Activated naive CD4-positive, alpha-beta T cell treated with anti-CD3 and anti-CD28 coated beads for 36 hours (primary cell): ENCODE measurements at regions of chr7 and their contacts with region 1.

Region 1: GRCh38 chr7:130758429-130759056 is 24.5 kb upstream of the KLF14 start:
- DNase-seq: no peak
- H3K4me3 Mint-ChIP-seq: no peak overlapping the region
- H3K27ac Mint-ChIP-seq: no peak overlapping the region
- H3K4me1 Mint-ChIP-seq: no peaks in the 10 kb centered on the region
- H3K27me3 Mint-ChIP-seq: peaks cover 3% of the 10 kb centered on the region

Region 2: GRCh38 chr7:130063036-130063435 is 695.5 kb before region 1 on chr7:
- CTCF ChIA-PET with region 1: interaction called, 6 read pairs
- intact Hi-C with region 1: loop called (anchors 2 kb)
- DNase-seq: peak; percentile 85
- H3K4me3 Mint-ChIP-seq: no peak overlapping the region
- H3K27ac Mint-ChIP-seq: no peak overlapping the region
- H3K4me1 Mint-ChIP-seq: no peaks in the 10 kb centered on the region
- H3K27me3 Mint-ChIP-seq: peaks cover 2% of the 10 kb centered on the region